ENCODE measurements at regions of chr5 and their contacts with region 1.

Region 1: DNA sequence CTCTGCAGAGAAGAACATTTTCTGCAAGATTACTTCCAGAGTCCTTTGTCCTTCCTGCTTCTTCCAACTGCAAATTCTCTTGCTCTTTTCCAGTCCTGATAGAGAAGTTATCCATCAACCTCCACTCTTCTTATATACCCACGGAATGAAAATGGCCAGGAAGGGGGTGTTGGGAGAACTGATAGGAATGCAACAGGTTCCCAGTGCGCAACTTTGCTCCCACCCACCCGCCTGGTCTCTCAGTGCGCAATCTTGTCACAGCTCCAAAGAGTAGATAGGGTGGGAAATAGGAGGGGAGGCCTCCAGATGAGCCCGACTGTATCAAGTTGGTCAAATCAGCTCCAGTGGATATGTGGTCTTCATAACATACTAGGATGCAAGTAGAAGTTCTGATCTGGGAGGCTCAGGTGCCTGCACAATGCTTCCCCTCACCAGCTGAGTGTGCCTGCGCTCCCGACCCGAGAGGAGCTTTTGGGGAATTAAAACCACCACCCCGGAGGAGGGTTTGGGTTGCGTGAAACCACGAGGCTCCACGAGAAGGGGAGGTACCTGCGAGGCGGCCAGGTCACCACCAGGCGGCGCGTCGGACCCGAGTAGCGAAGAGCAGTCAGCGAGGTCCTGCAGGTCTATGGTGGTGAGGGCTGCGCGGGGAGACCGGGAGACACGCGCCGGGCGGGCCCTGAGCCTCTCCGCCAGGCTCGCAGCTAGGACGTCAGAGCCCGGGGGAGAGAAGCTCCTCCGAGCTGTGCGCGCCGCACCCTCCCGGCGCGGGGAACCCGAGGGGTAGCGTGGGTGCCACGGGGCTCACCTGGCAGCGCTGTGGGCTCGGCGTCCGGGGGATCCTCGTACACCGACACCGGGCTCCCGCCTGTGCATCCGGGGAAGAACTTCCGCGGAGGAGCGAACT is 835 bp downstream of the MCIDAS start:
- DNase-seq: peak; percentile 72
- ATAC-seq: peak; percentile 85
- H3K4me3 ChIP-seq: peak overlapping the region; percentile 62 to 75
- H3K27ac ChIP-seq: peak overlapping the region; percentile 92
- H3K4me1 ChIP-seq: peaks cover 10 to 19% of the 10 kb centered on the region in 2 experiments
- H3K27me3 ChIP-seq: no peaks in the 10 kb centered on the region
- CTCF ChIP-seq: peak in 2 of 3 experiments; percentile 83 to 92; a peak in 4 of 6 replicates
- POLR2A ChIP-seq: peak; percentile 71
- RAD21 ChIP-seq: no peak

Region 2: DNA sequence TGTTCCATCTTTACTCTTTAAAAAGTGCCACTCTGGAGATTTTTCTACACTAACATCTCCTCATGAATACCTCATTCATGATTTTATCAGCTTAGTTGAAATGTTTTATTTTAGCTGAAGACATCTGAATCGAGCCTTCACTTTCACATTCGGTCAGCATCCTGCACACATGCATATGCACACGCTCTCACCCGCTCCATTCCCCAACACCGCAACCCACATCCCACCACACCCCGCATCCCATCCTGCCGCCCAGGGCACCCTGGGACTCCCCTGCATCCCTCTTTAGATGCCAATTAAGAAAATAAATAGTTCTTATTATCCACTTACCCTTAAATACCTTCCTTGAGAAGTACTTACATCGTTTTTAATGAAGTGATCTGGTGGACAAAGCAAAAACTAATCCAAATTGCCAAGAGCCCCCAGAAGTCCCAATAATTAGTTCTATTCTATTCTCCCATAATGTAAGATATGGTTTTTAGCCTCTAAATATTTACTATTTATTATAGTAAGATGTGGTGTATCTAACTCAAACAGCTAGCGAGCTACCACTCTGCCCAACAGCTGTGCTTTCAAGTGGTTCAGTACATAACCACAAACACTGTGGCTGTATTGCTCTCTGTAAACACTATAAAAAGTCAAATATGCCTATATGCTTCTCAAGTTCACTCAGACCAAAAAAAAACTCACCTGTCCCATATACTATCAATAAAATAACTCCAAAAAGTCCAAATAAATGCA is 164.1 kb before region 1 on chr5:
- CTCF ChIA-PET with region 1: no interaction called
- POLR2A ChIA-PET with region 1: no interaction called
- RAD21 ChIA-PET with region 1: no interaction called
- intact Hi-C with region 1: no loop called
- DNase-seq: no peak
- ATAC-seq: no peak
- H3K4me3 ChIP-seq: no peak overlapping the region
- H3K27ac ChIP-seq: no peak overlapping the region
- H3K4me1 ChIP-seq: no peaks in the 10 kb centered on the region
- H3K27me3 ChIP-seq: peaks cover 46% of the 10 kb centered on the region
- CTCF ChIP-seq: no peak
- POLR2A ChIP-seq: no peak
- RAD21 ChIP-seq: no peak

Region 3: DNA sequence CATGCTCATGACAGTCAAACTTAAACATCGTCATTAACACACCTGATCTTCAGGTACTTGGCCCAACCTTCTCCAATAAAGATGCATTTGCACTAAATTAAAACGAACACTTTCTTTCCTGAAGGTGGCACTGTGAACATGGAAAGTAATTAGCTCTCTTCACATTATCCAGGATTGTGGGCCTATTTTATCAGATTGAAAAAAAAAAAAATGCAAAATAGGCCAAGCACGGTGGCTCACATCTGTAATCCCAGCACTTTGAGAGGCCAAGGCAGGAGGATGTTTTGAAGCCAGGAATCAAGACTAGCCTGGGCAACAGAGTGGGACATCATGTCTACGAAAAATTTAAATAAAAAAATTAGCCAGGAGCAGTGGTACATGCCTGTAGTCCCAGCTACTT is 38.9 kb before region 1 on chr5:
- CTCF ChIA-PET with region 1: no interaction called
- POLR2A ChIA-PET with region 1: interaction called, 3 read pairs
- RAD21 ChIA-PET with region 1: no interaction called
- intact Hi-C with region 1: loop called (anchors 5 kb)
- DNase-seq: peak; percentile 57
- ATAC-seq: peak; percentile 95
- H3K4me3 ChIP-seq: no peak overlapping the region
- H3K27ac ChIP-seq: no peak overlapping the region
- H3K4me1 ChIP-seq: no peaks in the 10 kb centered on the region
- H3K27me3 ChIP-seq: no peaks in the 10 kb centered on the region
- CTCF ChIP-seq: peak; percentile 44 to 57 (median 47); a peak in 4 of 6 replicates
- POLR2A ChIP-seq: no peak
- RAD21 ChIP-seq: peak; percentile 80

Region 4: GRCh38 chr5:55307383-55308253 is 81.3 kb after region 1 on chr5 and contains the starts of genes DHX29 and MTREX:
- CTCF ChIA-PET with region 1: no interaction called
- POLR2A ChIA-PET with region 1: interaction called, 3 read pairs
- RAD21 ChIA-PET with region 1: no interaction called
- intact Hi-C with region 1: loop called (anchors 2 kb)
- DNase-seq: peak; percentile 80
- ATAC-seq: peak; percentile 93
- H3K4me3 ChIP-seq: peak within 1 kb of the TSS; percentile 89 to 96
- H3K27ac ChIP-seq: peak within 1 kb of the TSS; percentile 93
- H3K4me1 ChIP-seq: peaks cover 18 to 19% of the 10 kb centered on the region in 2 experiments
- H3K27me3 ChIP-seq: no peaks in the 10 kb centered on the region
- CTCF ChIP-seq: no peak
- POLR2A ChIP-seq: peak; percentile 53
- RAD21 ChIP-seq: no peak
- total RNA-seq, gene DHX29: 24.3 TPM
- total RNA-seq, gene MTREX: 101 TPM

Region 5: GRCh38 chr5:55923177-55923771 is 697.0 kb after region 1 on chr5:
- CTCF ChIA-PET with region 1: no interaction called
- POLR2A ChIA-PET with region 1: no interaction called
- RAD21 ChIA-PET with region 1: no interaction called
- intact Hi-C with region 1: loop called (anchors 5 kb)
- DNase-seq: no peak
- ATAC-seq: no peak
- H3K4me3 ChIP-seq: no peak overlapping the region
- H3K27ac ChIP-seq: no peak overlapping the region
- H3K4me1 ChIP-seq: no peaks in the 10 kb centered on the region
- H3K27me3 ChIP-seq: no peaks in the 10 kb centered on the region
- CTCF ChIP-seq: no peak
- POLR2A ChIP-seq: no peak
- RAD21 ChIP-seq: no peak

Region 6: GRCh38 chr5:56543441-56544390 is 1317.4 kb after region 1 on chr5:
- CTCF ChIA-PET with region 1: no interaction called
- POLR2A ChIA-PET with region 1: no interaction called
- RAD21 ChIA-PET with region 1: no interaction called
- intact Hi-C with region 1: no loop called
- DNase-seq: peak; percentile 23
- ATAC-seq: peak; percentile 54
- H3K4me3 ChIP-seq: no peak overlapping the region
- H3K27ac ChIP-seq: no peak overlapping the region
- H3K4me1 ChIP-seq: peaks cover 0 to 16% of the 10 kb centered on the region in 2 experiments; a peak in 2 of 4 replicates
- H3K27me3 ChIP-seq: no peaks in the 10 kb centered on the region
- CTCF ChIP-seq: no peak
- POLR2A ChIP-seq: no peak
- RAD21 ChIP-seq: no peak

Region 7: GRCh38 chr5:56783261-56783660 is 1557.0 kb after region 1 on chr5:
- CTCF ChIA-PET with region 1: no interaction called
- POLR2A ChIA-PET with region 1: no interaction called
- RAD21 ChIA-PET with region 1: no interaction called
- intact Hi-C with region 1: no loop called
- DNase-seq: no peak
- ATAC-seq: no peak
- H3K4me3 ChIP-seq: no peak overlapping the region
- H3K27ac ChIP-seq: no peak overlapping the region
- H3K4me1 ChIP-seq: no peaks in the 10 kb centered on the region
- H3K27me3 ChIP-seq: no peaks in the 10 kb centered on the region
- CTCF ChIP-seq: no peak
- POLR2A ChIP-seq: no peak
- RAD21 ChIP-seq: no peak